Ascending aorta (tissue), 2 donors: ENCODE measurements at regions of chr5 and their contacts with region 1.

Region 1: DNA sequence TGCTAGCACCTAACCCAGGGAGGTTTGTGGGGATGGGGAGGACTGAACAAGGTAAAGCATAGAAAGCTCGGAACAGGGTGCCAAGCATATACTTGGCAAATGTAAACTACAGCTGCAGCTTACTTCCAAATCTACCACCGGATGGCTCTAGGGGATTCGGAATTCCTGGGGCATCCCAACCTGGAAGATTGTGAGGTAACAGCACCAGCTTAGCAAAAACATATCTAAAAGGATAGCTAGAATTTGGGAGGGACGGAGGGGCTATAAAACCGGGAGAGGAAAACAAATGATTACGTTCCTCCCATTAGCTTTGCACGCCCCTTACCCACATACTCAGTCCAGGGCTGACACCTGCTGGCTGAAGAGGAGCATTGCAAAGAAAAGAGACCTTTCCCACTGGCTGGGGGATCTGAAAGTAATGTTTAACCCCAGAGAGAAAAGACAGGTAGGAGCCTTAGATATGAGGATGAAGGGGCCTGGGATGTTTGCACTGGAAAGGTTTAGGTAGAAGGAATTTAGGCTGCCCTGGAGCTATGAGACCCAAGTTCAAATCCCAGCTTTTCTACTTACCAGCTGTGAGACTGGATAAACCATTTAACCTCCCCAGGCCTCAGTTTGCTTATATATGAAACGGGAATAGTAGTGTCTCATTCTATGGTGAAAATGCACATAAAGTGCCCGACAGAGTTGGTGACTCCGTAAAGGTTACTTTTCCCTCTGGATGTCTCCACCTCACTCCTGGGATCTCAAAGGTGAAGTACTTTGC is 73.6 kb downstream of the FAM114A2 start:
- DNase-seq: peak in 1 of 2 donors; percentile 72
- H3K4me3 ChIP-seq: peak overlapping the region in 1 of 2 donors; percentile 47
- H3K27ac ChIP-seq: peak overlapping the region; percentile 10 to 34
- H3K4me1 ChIP-seq: peaks cover under 1 to 11% of the 10 kb centered on the region in 2 donors
- H3K27me3 ChIP-seq: no peaks in the 10 kb centered on the region
- CTCF ChIP-seq: peak; percentile 82 to 94 (median 90)

Region 2: DNA sequence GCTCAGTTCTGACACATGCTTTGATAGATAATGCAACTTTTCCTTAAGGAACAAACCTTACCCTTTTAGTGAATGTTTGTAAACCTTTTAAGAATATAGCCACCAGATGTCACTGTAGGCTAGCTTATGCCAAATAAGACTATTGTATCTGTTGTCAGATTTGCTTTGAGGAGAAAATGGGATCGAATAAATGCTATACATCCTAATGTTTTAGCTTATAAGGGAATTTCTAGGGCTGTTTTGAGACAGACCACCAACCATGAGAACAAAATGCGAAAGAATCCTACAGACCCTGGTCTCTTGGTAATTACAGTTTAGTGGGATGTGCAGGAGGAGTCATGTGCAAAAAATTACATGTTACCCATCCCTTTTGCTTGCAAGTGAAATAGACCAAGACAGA is 1432.3 kb before region 1 on chr5:
- intact Hi-C with region 1: loop called (anchors 1 kb)
- DNase-seq: no peak
- H3K4me3 ChIP-seq: no peak overlapping the region
- H3K27ac ChIP-seq: no peak overlapping the region
- H3K4me1 ChIP-seq: no peaks in the 10 kb centered on the region
- H3K27me3 ChIP-seq: no peaks in the 10 kb centered on the region
- CTCF ChIP-seq: peak; percentile 48 to 66 (median 59)

Region 3: GRCh38 chr5:152634586-152634985 is 1330.5 kb before region 1 on chr5:
- intact Hi-C with region 1: loop called (anchors 10 kb)
- DNase-seq: peak in 1 of 2 donors; percentile 66
- H3K4me3 ChIP-seq: no peak overlapping the region
- H3K27ac ChIP-seq: peak overlapping the region; percentile 85 to 90
- H3K4me1 ChIP-seq: peaks cover 0 to 61% of the 10 kb centered on the region in 2 donors
- H3K27me3 ChIP-seq: no peaks in the 10 kb centered on the region
- CTCF ChIP-seq: no peak

Region 4: GRCh38 chr5:152711989-152712388 is 1253.1 kb before region 1 on chr5:
- intact Hi-C with region 1: loop called (anchors 10 kb)
- DNase-seq: no peak
- H3K4me3 ChIP-seq: no peak overlapping the region
- H3K27ac ChIP-seq: no peak overlapping the region
- H3K4me1 ChIP-seq: peaks cover 0 to 5% of the 10 kb centered on the region in 2 donors
- H3K27me3 ChIP-seq: no peaks in the 10 kb centered on the region
- CTCF ChIP-seq: no peak

Region 5: GRCh38 chr5:153147891-153148623 is 817.0 kb before region 1 on chr5:
- intact Hi-C with region 1: loop called (anchors 10 kb)
- DNase-seq: no peak
- H3K4me3 ChIP-seq: no peak overlapping the region
- H3K27ac ChIP-seq: no peak overlapping the region
- H3K4me1 ChIP-seq: no peaks in the 10 kb centered on the region
- H3K27me3 ChIP-seq: no peaks in the 10 kb centered on the region
- CTCF ChIP-seq: peak in 2 of 3 experiments; percentile 55 to 64

Region 6: DNA sequence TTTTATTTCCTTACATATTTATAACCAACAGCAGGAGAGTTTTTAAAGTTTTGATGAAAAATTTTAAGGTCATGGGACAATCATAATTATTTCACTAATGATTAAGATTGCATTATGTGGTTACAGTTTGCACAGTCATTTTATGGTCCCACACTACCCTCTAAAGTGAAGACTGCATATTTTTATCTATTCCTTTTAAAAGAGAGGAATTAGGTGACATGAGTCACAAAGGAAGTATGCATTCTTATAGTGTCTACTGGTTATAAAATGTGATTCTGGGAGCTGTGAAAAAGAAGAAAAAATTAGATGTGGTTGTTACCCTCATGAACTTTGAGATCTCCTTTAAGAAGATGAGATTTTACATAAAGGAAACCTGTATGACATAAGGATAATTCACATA is 562.5 kb before region 1 on chr5:
- intact Hi-C with region 1: loop called (anchors 10 kb)
- DNase-seq: no peak
- H3K4me3 ChIP-seq: no peak overlapping the region
- H3K27ac ChIP-seq: no peak overlapping the region
- H3K4me1 ChIP-seq: peaks cover 0 to 15% of the 10 kb centered on the region in 2 donors
- H3K27me3 ChIP-seq: no peaks in the 10 kb centered on the region
- CTCF ChIP-seq: no peak

Region 7: DNA sequence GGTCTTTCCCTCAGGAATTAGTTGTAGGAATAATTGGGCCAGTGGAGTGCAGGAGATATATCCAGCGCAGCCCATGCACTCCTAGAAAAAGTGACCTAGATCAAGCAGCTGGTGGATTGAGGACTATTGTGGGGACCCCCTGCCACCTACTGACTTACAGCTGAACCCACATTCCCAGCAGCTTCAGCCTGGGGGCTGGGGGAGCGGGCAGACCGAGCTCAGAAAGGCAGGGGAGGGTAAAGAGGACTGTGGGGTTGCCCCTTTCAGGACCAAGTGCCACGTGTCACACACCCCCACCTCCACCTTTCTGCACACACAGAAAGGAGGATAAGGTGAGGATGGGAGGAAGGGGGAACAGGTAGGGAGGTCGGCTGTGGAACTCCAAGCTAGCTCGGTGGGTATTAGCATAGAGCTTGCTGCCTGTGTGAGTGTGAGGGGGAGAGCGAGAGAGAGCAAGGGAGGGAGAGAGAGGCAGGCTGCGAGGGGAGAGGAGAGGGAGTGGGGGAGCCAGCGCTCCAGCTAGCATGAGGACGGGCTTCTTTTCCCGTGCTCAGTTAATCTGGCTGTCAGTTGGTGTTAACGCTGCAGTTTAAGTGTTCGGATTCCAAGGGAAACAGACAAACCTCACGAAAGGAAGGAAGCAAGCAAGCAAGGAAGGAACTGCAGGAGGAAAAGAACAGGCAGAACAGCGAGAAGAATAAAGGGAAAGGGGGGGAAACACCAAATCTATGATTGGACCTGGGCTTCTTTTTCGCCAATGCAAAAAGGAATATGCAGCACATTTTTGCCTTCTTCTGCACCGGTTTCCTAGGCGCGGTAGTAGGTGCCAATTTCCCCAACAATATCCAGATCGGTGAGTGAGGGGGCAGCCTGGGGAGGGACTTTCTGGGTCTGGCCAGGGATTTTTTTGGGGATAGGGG is 474.7 kb before region 1 on chr5 and contains the start of gene GRIA1:
- intact Hi-C with region 1: loop called (anchors 5 kb)
- DNase-seq: no peak
- H3K4me3 ChIP-seq: peak within 1 kb of the TSS; percentile 46 to 65
- H3K27ac ChIP-seq: no peak within 1 kb of the TSS
- H3K4me1 ChIP-seq: peaks cover 0 to 7% of the 10 kb centered on the region in 2 donors
- H3K27me3 ChIP-seq: no peaks in the 10 kb centered on the region
- CTCF ChIP-seq: peak in 1 of 3 experiments; percentile 9
- total RNA-seq, gene GRIA1: 7.0 TPM